ENCODE measurements at regions of chr18 and their contacts with region 1.

Region 1: DNA sequence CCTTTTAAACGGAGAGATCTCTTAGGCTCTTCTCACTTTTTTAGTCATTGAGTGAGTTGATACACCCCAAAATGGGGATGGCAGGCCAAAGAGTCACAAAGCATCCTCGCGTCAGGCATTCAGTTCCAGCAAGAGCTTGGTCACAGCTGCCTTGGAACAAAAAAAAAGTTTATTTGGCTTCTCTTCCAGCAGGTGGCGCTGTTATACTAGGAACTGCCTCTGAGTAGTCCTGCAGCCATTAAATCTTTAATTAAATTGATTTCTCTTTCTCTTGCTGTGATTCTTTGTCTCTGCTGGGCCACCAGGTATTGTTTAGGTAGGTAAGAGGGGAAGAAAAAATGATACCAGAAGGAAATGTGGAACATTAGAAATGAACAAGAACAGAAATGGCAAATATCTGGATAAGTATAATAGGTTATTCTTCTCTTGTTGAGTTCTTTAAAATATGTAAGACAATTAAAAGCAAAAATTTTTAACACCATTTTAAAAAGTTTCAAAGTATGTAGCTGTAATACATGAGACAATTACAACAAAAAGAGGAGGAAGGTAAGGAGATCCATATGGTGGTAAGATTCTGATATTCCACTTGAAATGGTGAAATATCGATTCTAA is 175.1 kb downstream of the GALNT1 start:
- DNase-seq: peak in 12 of 14 experiments; percentile 8 to 71 (median 36)
- ATAC-seq: peak; percentile 57
- H3K4me3 ChIP-seq: no peak overlapping the region
- H3K4me3 Mint-ChIP-seq: no peak overlapping the region
- H3K27ac ChIP-seq: no peak overlapping the region
- H3K27ac Mint-ChIP-seq: no peak overlapping the region
- H3K4me1 ChIP-seq: no peaks in the 10 kb centered on the region
- H3K4me1 Mint-ChIP-seq: no peaks in the 10 kb centered on the region
- H3K27me3 ChIP-seq: peaks cover 0 to 4% of the 10 kb centered on the region in 2 experiments
- H3K27me3 Mint-ChIP-seq: peaks cover 33% of the 10 kb centered on the region
- CTCF ChIP-seq: peak; percentile 96

Region 2: GRCh38 chr18:36023336-36023735 is 266.7 kb after region 1 on chr18:
- CTCF ChIA-PET with region 1: no interaction called
- POLR2A ChIA-PET with region 1: no interaction called
- intact Hi-C with region 1: loop called in 1 of 2 experiments (anchors 5 kb)
- DNase-seq: no peak
- ATAC-seq: no peak
- H3K4me3 ChIP-seq: no peak overlapping the region
- H3K4me3 Mint-ChIP-seq: no peak overlapping the region
- H3K27ac ChIP-seq: no peak overlapping the region
- H3K27ac Mint-ChIP-seq: peak overlapping the region; percentile 48
- H3K4me1 ChIP-seq: no peaks in the 10 kb centered on the region
- H3K4me1 Mint-ChIP-seq: peaks cover 11% of the 10 kb centered on the region
- H3K27me3 ChIP-seq: no peaks in the 10 kb centered on the region
- H3K27me3 Mint-ChIP-seq: no peaks in the 10 kb centered on the region
- CTCF ChIP-seq: no peak

Measured in CD4-positive, alpha-beta T cell (primary cell).